ENCODE measurements at regions of chr1 and their contacts with region 1.

Region 1: GRCh38 chr1:196651637-196652215 is at the start of gene CFH:
- DNase-seq: no peak
- total RNA-seq, gene CFH: 58.0 TPM

Region 2: GRCh38 chr1:196160066-196160795 is 491.5 kb before region 1 on chr1:
- intact Hi-C with region 1: no loop called
- DNase-seq: no peak

Region 3: DNA sequence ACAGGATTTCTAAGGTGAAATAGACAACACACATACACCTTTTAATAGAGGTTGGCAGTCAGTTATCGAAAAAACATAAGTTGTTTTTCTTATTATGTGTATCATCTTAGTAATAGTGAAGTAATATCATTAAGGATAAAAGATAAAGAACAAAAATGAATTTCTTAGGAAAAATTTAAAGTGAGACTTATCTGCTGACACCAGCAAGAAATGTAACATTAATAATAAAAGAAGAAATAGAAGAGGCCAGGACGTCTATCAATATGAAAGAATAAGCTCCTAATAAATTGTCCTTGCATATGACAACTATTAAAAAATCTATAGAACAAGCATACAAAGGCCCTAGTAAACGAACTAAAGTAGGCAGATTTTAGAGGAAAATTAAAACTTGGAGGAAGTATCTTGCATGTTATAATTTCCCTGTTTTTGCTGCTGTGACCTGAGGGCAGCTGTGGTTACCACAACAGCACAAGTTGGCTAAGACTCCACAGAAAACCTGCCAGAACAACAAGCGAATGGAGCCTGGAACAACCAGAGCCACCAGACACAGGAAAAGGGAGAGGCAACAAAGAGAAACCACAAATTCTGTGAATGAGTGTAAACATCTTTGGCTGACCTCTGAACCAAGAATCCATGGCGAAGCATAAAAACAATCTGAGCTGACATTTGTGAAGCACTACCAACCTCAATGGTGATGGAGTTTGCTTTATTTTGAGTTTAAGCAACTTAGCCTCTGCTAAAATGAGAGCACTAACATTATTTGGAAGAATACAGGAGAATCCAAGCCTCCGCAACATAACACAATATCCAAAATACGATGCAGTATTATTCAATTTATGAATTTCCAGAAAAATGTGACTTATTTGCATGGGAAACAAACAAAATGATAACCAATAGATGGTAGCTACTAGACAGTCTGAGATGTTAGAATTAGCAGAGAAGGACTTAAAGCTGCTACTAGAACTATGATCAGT is 251.0 kb before region 1 on chr1:
- intact Hi-C with region 1: loop called (anchors 5 kb)
- DNase-seq: no peak

Region 4: GRCh38 chr1:196535727-196536126 is 116.0 kb before region 1 on chr1:
- intact Hi-C with region 1: loop called (anchors 10 kb)
- DNase-seq: no peak

Region 5: DNA sequence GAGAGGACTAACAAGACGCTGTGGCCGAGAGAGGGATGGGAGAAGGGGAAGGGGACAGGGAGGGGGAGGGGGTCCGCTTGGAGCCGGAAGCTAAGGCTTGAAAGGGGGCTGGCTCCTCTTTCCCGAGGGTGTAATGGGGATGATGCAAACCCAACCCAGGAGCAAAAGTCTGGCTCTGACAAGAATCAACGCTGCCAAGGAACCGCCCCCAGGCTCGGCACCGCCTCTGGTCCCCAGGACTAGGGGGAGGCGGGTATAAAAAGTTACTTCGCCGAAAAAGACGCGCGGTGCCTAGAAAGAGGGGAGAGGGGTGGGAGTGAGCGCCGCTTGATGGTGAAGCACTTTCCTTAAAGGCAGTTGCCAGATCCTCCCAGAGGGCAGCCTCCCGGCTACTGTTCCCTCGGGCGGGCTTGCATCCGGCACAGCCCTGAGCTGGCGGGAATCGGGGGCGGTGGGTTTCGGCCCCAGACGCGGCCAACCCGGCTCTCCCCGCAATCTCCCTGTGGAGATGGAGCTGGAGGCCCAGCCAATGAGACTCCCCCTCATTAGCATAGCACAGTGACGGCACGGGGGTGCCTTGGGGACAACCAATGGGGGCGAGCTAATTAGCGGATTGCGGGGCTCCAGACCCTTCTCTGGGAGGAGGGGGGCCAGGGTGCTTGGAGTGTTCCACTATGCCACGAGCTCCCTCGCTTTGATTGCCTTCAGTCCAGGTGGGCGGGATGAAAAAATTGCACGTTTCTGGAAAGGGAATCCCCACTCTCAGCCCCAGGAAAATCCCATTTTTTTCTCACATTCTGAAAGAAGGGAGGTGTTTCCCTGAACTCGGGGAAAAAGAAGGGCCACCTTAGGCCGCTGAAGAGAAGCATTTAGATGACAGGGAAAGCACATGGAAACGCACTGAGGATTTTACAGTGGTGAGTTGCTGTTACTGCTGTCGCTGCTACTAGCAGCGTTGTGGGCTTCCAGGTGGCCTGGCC is 43.0 kb before region 1 on chr1 and contains the start of gene KCNT2:
- intact Hi-C with region 1: loop called (anchors 5 kb)
- DNase-seq: peak; percentile 74
- total RNA-seq, gene KCNT2: 2.1 TPM